MCF 10A (cell line): ENCODE measurements at regions of chr7 and their contacts with region 1.

Region 1: GRCh38 chr7:50467817-50468610 is 17.9 kb upstream of the FIGNL1 start:
- DNase-seq: peak; percentile 80
- H3K4me3 Mint-ChIP-seq: no peak overlapping the region
- H3K27ac Mint-ChIP-seq: no peak overlapping the region
- H3K4me1 Mint-ChIP-seq: peaks cover 7% of the 10 kb centered on the region
- H3K27me3 Mint-ChIP-seq: no peaks in the 10 kb centered on the region
- CTCF ChIP-seq: peak; percentile 91

Region 2: GRCh38 chr7:50455658-50456057 is 12.4 kb before region 1 on chr7:
- CTCF ChIA-PET with region 1: interaction called, 21 read pairs
- POLR2A ChIA-PET with region 1: no interaction called
- intact Hi-C with region 1: no loop called
- DNase-seq: no peak
- H3K4me3 Mint-ChIP-seq: no peak overlapping the region
- H3K27ac Mint-ChIP-seq: no peak overlapping the region
- H3K4me1 Mint-ChIP-seq: no peaks in the 10 kb centered on the region
- H3K27me3 Mint-ChIP-seq: peaks cover 9% of the 10 kb centered on the region
- CTCF ChIP-seq: no peak

Region 3: DNA sequence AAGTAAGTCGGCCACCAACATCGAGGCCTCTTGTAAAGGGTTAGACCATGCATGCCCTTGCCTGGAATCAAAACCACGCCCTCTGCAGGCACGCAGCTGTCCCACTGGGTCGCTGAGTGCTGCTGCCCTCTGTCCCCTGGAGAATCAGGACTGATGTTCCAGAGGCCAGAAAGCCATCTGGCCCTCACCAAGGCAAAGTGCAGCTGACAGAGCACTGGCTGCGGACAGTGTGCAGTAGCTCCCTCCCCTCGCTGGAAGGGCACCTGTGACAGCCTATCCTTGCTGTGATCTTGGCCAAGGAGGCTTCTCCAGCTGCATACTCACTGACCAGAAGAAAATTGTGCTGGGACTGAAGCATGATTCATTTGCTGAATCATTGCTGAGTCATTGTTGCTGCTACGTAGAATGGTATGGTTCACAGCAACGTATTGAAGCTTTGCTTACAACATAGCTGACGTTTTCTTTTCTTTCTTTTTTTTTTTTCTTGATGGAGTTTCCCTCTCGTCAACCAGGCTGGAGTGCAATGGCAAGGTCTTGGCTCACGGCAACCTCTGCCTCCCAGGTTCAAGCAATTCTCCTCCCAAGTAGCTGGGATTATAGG is 66.8 kb after region 1 on chr7:
- CTCF ChIA-PET with region 1: interaction called, 11 read pairs
- POLR2A ChIA-PET with region 1: interaction called, 3 read pairs
- intact Hi-C with region 1: loop called (anchors 2 kb)
- DNase-seq: peak; percentile 96
- H3K4me3 Mint-ChIP-seq: peak overlapping the region; percentile 44
- H3K27ac Mint-ChIP-seq: peak overlapping the region; percentile 98
- H3K4me1 Mint-ChIP-seq: peaks cover 29% of the 10 kb centered on the region
- H3K27me3 Mint-ChIP-seq: no peaks in the 10 kb centered on the region
- CTCF ChIP-seq: no peak

Region 4: DNA sequence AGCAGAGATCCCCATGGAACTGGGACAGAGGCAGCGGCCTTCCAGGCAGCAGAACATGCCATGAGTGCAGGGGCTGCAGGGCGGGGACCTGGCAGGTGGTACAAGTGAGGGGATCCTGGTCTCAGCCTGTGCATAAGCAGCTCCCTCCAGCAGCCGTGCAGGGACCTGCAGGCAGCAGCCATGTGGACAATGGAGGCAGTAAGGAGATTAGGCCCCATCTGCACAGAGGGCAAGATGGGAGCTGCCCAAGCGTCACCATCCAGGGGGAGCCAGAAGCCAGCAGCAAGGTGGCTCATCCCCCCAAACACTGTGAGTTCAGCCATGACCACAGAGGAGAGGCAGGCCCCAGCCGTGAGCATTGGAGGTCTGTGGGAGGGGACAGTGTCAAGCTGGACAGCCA is 94.1 kb after region 1 on chr7:
- CTCF ChIA-PET with region 1: no interaction called
- POLR2A ChIA-PET with region 1: no interaction called
- intact Hi-C with region 1: no loop called
- DNase-seq: no peak
- H3K4me3 Mint-ChIP-seq: no peak overlapping the region
- H3K27ac Mint-ChIP-seq: no peak overlapping the region
- H3K4me1 Mint-ChIP-seq: no peaks in the 10 kb centered on the region
- H3K27me3 Mint-ChIP-seq: peaks cover 43% of the 10 kb centered on the region
- CTCF ChIP-seq: no peak

Region 5: GRCh38 chr7:50610521-50611277 is 142.7 kb after region 1 on chr7:
- CTCF ChIA-PET with region 1: interaction called, 27 read pairs
- POLR2A ChIA-PET with region 1: no interaction called
- intact Hi-C with region 1: no loop called
- DNase-seq: peak; percentile 72
- H3K4me3 Mint-ChIP-seq: no peak overlapping the region
- H3K27ac Mint-ChIP-seq: peak overlapping the region; percentile 21
- H3K4me1 Mint-ChIP-seq: peaks cover 14% of the 10 kb centered on the region
- H3K27me3 Mint-ChIP-seq: no peaks in the 10 kb centered on the region
- CTCF ChIP-seq: no peak

Region 6: DNA sequence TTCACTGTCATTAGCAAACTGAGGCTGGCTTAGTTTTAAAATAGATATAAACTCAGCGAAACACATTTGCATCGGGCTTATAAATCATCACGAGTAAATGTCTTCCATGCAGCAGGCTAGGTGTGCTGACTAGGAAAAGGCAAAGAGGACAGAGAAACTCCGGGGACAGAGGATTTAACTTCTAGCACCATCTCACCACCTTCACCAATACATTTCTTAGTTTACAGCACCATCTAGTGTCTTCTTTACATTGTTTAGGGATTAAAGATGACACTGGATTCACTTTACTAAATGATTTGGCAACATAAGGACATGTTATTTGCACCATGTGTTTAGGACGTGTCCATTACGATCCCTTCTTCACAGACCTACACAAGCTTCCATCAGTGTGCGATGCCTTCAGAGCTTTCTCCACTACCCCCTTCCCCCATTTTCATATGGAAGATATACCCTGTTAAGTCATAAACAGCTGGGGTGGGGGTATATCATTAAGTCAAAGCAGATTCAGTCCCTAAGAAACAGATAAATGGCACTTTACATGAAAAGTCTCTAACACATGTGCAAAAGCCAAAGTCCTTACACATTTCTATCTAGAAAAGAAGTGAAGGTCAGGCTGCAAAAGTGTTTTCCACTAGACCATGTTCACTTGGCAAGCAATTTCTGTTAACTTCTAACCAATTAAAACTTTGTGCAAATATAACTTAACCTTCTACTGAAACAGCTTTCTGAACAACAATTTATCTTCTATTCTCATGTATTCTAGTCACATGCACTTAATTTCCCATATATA is 211.4 kb after region 1 on chr7:
- CTCF ChIA-PET with region 1: interaction called, 77 read pairs
- POLR2A ChIA-PET with region 1: no interaction called
- intact Hi-C with region 1: loop called (anchors 1 kb)
- DNase-seq: peak; percentile 58
- H3K4me3 Mint-ChIP-seq: no peak overlapping the region
- H3K27ac Mint-ChIP-seq: no peak overlapping the region
- H3K4me1 Mint-ChIP-seq: peaks cover 6% of the 10 kb centered on the region
- H3K27me3 Mint-ChIP-seq: no peaks in the 10 kb centered on the region
- CTCF ChIP-seq: peak; percentile 40

Region 7: GRCh38 chr7:51141451-51142003 is 673.5 kb after region 1 on chr7:
- CTCF ChIA-PET with region 1: interaction called, 36 read pairs
- POLR2A ChIA-PET with region 1: interaction called, 4 read pairs
- intact Hi-C with region 1: loop called (anchors 1 kb)
- DNase-seq: peak; percentile 55
- H3K4me3 Mint-ChIP-seq: no peak overlapping the region
- H3K27ac Mint-ChIP-seq: no peak overlapping the region
- H3K4me1 Mint-ChIP-seq: peaks cover 27% of the 10 kb centered on the region
- H3K27me3 Mint-ChIP-seq: no peaks in the 10 kb centered on the region
- CTCF ChIP-seq: peak; percentile 71